Sigmoid colon (tissue), 7 donors: ENCODE measurements at regions of chr14 and their contacts with region 1.

Region 1: GRCh38 chr14:32252030-32252670 is 49.1 kb upstream of the RNU6-8 start:
- DNase-seq: peak; percentile 72
- H3K4me3 ChIP-seq: no peak overlapping the region
- H3K27ac ChIP-seq: peak overlapping the region; percentile 1 to 72 (median 61)
- H3K4me1 ChIP-seq: peaks cover 0 to 45% (median 36%) of the 10 kb centered on the region in 4 donors
- H3K27me3 ChIP-seq: no peaks in the 10 kb centered on the region
- CTCF ChIP-seq: peak; percentile 71 to 80 (median 76)
- EP300 ChIP-seq: no peak
- POLR2A ChIP-seq: no peak

Region 2: GRCh38 chr14:31510222-31510621 is 741.9 kb before region 1 on chr14:
- intact Hi-C with region 1: loop called (anchors 5 kb)
- DNase-seq: no peak
- H3K4me3 ChIP-seq: no peak overlapping the region
- H3K27ac ChIP-seq: no peak overlapping the region
- H3K4me1 ChIP-seq: peaks cover 0 to 18% (median 12%) of the 10 kb centered on the region in 4 donors
- H3K27me3 ChIP-seq: no peaks in the 10 kb centered on the region
- CTCF ChIP-seq: peak; percentile 18 to 64 (median 54)
- EP300 ChIP-seq: no peak
- POLR2A ChIP-seq: no peak

Region 3: DNA sequence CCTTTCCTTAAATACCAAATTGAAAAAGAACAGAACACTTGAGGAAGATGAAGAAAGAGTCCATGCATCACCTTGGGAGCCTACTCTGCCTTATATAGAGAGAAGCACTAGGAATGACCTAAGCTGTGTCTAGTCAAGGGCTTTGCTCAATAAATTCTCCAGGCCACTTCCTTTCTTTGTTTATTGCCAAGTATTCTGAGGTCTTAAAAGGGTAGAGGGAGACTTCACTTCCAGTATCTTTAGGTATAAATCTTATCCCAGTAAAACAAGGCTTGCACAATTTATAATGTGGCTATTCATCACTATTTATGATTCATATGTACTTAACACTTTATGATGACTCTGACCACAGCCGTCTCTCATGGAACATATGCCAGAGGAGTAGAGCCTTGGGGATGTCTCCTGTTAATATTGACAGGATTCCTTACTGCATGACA is 260.1 kb before region 1 on chr14:
- intact Hi-C with region 1: loop called (anchors 5 kb)
- DNase-seq: no peak
- H3K4me3 ChIP-seq: no peak overlapping the region
- H3K27ac ChIP-seq: peak overlapping the region; percentile 4 to 73 (median 48)
- H3K4me1 ChIP-seq: peaks cover 0 to 50% (median 38%) of the 10 kb centered on the region in 4 donors
- H3K27me3 ChIP-seq: no peaks in the 10 kb centered on the region
- CTCF ChIP-seq: no peak
- EP300 ChIP-seq: peak; percentile 52 to 93 (median 80)
- POLR2A ChIP-seq: no peak

Region 4: DNA sequence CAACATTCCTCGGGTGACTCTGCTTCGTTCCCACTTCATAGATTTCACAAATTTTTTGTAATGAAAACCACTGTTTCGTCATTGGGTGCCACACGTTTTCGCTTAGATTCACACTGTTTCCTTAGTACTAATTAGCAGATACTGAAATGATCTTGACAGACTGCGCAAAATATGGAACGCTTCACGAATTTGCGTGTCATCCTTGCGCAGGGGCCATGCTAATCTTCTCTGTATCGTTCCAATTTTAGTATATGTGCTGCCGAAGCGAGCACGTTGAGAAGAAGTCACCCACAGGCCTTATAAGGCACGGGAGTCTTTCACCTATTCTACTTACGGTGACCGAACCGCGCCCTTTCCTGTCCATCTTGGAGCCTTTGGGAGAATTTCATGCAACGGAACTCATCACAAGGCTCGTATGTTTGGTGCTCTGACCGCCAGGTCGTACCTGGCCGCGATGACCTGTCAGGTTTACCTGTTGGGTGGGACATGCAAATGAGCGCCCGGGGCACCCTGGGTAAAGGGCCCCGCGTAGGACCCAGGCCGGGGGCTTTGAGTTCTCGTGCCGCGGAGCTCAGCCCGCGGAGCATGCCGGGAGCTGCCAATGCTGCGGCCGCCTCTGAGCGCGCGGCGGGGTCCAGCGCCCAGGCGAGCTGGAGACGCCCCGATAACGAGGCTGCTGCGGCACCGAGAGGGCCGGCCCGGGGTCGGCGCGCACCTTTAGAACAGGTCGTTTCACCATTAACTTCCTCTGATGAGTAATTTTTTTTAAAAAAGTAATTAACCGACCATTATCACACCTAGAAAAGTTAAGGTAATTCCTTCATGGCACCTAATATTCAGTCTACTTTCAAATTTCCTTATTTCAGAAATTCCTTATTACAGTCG is 48.9 kb before region 1 on chr14 and contains the start of gene RNU6-8:
- intact Hi-C with region 1: loop called (anchors 2 kb)
- DNase-seq: peak; percentile 95
- H3K4me3 ChIP-seq: peak within 1 kb of the TSS; percentile 64 to 68 (median 65)
- H3K27ac ChIP-seq: peak within 1 kb of the TSS; percentile 78 to 87 (median 84)
- H3K4me1 ChIP-seq: peaks cover 0 to 12% (median 9%) of the 10 kb centered on the region in 4 donors
- H3K27me3 ChIP-seq: no peaks in the 10 kb centered on the region
- CTCF ChIP-seq: no peak
- EP300 ChIP-seq: no peak
- POLR2A ChIP-seq: peak; percentile 43 to 58
- total RNA-seq, gene RNU6-8: not detected

Region 5: GRCh38 chr14:32469388-32470160 is 217.4 kb after region 1 on chr14:
- intact Hi-C with region 1: loop called (anchors 2 kb)
- DNase-seq: no peak
- H3K4me3 ChIP-seq: no peak overlapping the region
- H3K27ac ChIP-seq: peak overlapping the region; percentile 70 to 82 (median 72)
- H3K4me1 ChIP-seq: peaks cover 0 to 75% (median 51%) of the 10 kb centered on the region in 4 donors
- H3K27me3 ChIP-seq: no peaks in the 10 kb centered on the region
- CTCF ChIP-seq: peak in 3 of 4 experiments; percentile 31 to 51 (median 43)
- EP300 ChIP-seq: no peak
- POLR2A ChIP-seq: no peak

Region 6: DNA sequence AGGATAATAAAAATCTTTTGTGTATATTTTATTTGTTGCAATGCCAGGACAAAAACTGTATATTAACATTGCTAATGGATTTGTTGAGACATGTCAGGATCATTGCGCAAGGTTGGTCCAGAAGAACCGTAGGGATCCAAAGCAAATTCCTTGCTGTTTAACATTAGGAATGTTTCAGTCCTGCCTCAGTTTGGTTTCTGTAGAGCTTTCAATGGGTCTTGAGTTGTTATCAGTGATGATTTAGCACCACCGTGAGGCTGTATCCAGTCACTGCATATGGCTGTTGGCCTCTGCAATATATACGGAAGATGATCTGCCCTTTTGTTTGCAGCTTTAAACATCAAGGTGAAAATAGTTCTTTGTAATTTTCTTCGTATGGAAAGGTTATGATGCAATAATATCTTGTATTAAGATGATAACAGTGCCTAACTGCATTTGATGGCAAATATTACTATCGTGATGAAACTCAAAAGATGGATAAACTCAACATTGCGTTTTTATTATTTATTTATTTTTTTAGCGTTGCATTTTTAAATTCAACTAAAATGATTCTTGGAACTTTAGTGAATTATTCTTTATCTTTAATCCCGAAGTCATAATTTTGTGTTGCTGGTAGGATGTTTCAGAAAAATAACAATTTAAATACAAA is 308.2 kb after region 1 on chr14:
- intact Hi-C with region 1: loop called (anchors 5 kb)
- DNase-seq: peak; percentile 69
- H3K4me3 ChIP-seq: no peak overlapping the region
- H3K27ac ChIP-seq: peak overlapping the region; percentile 53 to 84 (median 74)
- H3K4me1 ChIP-seq: peaks cover 0 to 51% (median 43%) of the 10 kb centered on the region in 4 donors
- H3K27me3 ChIP-seq: no peaks in the 10 kb centered on the region
- CTCF ChIP-seq: peak; percentile 81 to 91 (median 90)
- EP300 ChIP-seq: no peak
- POLR2A ChIP-seq: no peak